Activated CD4-positive, alpha-beta T cell treated with anti-CD3 and anti-CD28 coated beads, Interleukin-2, amount 10 ng/mL, durations not matched to agents 24 days and 14 days (primary cell): ENCODE measurements at regions of chr9 and their contacts with region 1.

Region 1: DNA sequence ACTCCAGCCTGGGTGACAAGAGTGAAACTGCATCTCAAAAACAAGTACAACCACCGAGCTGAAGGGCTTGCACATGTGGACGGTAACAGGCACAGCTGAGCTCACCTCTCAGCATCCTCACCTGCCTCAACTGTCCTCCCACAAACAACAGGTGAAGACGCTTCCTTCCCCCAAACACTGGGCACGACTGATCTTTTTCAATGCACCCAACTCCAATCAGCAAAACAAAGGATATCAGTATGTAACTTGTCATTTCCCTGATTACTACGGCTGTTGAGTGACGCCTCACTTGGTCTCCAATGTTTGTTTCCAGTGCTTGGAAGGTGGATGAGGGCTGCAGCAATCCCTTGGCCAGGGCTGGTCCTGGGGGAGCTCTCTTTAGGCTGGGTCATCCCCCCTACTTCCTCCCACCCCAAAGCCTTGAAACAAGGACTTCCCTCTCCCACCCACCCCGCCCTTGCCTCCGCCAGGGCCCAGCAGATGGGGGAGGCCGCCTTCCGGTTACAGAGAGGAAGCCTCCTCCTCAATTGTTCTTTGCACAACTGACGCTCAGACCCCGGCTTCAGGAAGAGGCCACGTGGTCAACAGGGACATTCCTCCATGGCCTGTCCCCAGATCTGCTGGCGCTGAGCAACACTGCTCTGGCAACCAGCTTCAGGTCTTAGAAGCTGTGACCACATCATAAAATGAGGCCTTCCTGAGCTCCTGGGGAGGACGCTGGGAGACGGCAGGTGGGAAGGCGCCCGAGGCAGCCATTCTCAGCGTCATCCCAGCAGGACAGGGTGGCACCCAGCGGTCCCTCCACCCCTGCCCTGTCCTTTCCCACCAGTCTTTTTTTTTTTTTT is 5.9 kb downstream of the FAM78A start:
- DNase-seq: peak; percentile 87
- H3K4me3 Mint-ChIP-seq: peak overlapping the region; percentile 87
- H3K27ac Mint-ChIP-seq: peak overlapping the region; percentile 99
- H3K4me1 Mint-ChIP-seq: peaks cover 57% of the 10 kb centered on the region
- H3K27me3 Mint-ChIP-seq: no peaks in the 10 kb centered on the region

Region 2: GRCh38 chr9:131197160-131197911 is 73.1 kb before region 1 on chr9:
- intact Hi-C with region 1: no loop called
- DNase-seq: no peak
- H3K4me3 Mint-ChIP-seq: no peak overlapping the region
- H3K27ac Mint-ChIP-seq: no peak overlapping the region
- H3K4me1 Mint-ChIP-seq: no peaks in the 10 kb centered on the region
- H3K27me3 Mint-ChIP-seq: no peaks in the 10 kb centered on the region

Region 3: GRCh38 chr9:131237931-131238401 is 32.4 kb before region 1 on chr9:
- intact Hi-C with region 1: loop called (anchors 1 kb)
- DNase-seq: peak; percentile 96
- H3K4me3 Mint-ChIP-seq: peak overlapping the region; percentile 80
- H3K27ac Mint-ChIP-seq: peak overlapping the region; percentile 93
- H3K4me1 Mint-ChIP-seq: peaks cover 33% of the 10 kb centered on the region
- H3K27me3 Mint-ChIP-seq: no peaks in the 10 kb centered on the region

Region 4: GRCh38 chr9:131253891-131254491 is 16.4 kb before region 1 on chr9:
- intact Hi-C with region 1: loop called (anchors 1 kb)
- DNase-seq: peak; percentile 61
- H3K4me3 Mint-ChIP-seq: peak overlapping the region; percentile 28
- H3K27ac Mint-ChIP-seq: peak overlapping the region; percentile 93
- H3K4me1 Mint-ChIP-seq: peaks cover 41% of the 10 kb centered on the region
- H3K27me3 Mint-ChIP-seq: no peaks in the 10 kb centered on the region

Region 5: DNA sequence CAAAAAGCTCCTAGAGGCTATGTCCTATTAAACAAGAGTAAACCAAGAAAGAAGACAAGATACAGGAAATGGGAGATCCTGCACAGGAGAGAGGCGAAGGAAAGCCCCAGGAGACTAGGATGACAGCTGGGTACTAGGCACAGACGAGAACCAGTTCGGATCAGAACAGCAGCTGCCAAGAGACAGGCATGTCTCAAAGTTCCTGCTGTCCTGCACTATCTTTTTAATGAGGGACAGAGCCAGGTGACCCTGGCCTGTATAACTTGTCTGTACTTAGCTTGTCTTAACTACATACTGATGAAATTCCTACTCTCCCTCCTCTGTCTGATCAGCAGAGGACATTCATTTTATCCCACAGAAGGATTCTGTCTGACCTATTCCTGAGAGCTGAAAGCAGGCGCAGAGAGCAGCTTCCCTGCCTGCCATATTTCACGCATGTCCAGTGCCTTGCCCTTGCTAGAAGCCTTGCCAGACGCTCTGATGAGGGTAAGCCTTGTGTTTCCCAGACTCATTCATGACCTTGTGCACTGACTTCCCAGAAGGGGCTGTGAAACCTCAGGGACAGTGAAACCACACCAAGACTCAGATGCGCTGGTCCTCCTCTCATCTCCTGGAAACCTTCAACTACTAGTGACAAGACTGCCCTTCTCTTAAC is 1649.3 kb after region 1 on chr9:
- intact Hi-C with region 1: no loop called
- DNase-seq: no peak
- H3K4me3 Mint-ChIP-seq: no peak overlapping the region
- H3K27ac Mint-ChIP-seq: no peak overlapping the region
- H3K4me1 Mint-ChIP-seq: no peaks in the 10 kb centered on the region
- H3K27me3 Mint-ChIP-seq: no peaks in the 10 kb centered on the region